Left ventricle myocardium superior (tissue), 1 donor: ENCODE measurements at regions of chr5 and their contacts with region 1.

Region 1: GRCh38 chr5:159915904-159916840 is at the start of gene ADRA1B:
- DNase-seq: peak; percentile 89
- ATAC-seq: peak; percentile 92
- total RNA-seq, gene ADRA1B: 1.4 TPM

Region 2: DNA sequence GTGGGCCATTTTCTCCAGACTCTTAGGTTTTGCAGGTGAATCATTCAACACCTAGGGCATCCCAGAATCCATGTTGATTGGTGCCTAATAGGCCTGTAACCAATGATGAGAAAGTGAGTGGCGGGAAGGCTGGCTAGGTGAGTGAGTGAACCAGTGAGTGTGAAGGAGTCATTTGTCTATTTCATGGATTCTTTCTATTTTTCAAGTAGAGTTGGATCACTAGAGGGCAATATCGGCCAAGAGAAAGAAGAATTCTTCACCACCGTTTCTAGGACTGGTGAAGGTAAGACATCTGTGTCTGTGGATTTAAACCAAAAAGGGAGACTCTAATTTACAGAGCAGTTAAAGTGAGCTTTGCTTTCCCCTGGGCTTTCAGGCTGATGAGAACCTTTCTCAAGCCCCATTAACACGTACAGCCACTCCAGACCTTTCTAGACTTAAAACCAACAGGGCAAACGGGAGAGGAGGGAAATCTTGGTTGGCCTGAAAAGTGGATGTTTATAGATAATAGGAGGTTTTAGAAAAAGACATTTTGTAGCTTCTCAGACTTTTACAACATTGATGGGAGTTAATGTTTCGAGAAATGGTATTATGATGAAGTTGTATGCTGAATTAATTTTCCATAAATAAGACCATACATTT is 471.6 kb before region 1 on chr5:
- intact Hi-C with region 1: loop called (anchors 10 kb)
- DNase-seq: no peak
- ATAC-seq: no peak

Region 3: GRCh38 chr5:159515909-159516415 is 400.2 kb before region 1 on chr5:
- intact Hi-C with region 1: loop called (anchors 10 kb)
- DNase-seq: peak; percentile 69
- ATAC-seq: peak; percentile 80

Region 4: DNA sequence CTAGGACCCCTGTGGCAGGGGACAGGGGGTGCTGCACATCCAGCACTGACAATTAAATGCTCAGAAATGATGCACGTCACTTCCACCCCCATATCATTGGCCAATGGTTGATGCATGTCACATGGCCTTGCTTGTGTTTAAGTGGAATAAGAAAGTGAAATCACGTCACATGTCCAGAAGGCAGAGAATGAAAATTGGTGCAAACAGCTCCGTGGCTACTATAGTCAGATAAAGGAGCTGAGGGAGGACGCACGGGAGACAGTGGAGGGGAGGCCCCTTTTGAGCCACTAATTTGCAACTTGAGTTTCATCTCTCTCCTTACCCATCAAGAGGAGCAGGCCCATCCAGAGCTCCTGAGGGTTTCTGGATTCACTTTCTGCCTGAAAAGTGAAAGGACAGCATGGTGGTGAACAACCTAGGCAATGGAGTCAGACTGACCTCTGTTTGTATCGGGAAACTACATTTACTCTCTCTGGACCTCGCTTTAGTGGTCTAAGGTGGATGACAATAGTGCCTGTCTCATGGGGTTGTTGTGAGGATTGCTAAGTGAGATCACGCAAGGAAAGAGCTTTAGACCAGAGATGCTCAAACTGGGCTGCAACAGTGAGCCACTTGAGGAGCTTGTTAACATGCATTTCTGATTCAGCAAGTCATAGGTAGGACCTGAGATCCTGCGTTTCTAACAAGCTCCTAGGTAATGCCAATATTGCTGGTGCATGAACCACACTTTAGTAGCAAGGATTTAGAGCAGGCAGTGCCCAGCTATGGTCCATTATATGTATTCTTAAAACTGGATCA is 133.8 kb before region 1 on chr5:
- intact Hi-C with region 1: no loop called
- DNase-seq: no peak
- ATAC-seq: no peak